Naive thymus-derived CD8-positive, alpha-beta T cell (primary cell): ENCODE measurements at regions of chr17 and their contacts with region 1.

Region 1: GRCh38 chr17:74776044-74776977 is at the start of gene NAT9:
- DNase-seq: peak; percentile 95 to 100 (median 98)
- ATAC-seq: peak; percentile 76 to 83
- H3K4me3 Mint-ChIP-seq: peak within 1 kb of the TSS; percentile 96 to 100 (median 99)
- H3K27ac Mint-ChIP-seq: peak within 1 kb of the TSS; percentile 93 to 99 (median 96)
- H3K4me1 Mint-ChIP-seq: peaks cover 26 to 71% (median 61%) of the 10 kb centered on the region in 4 donors
- H3K27me3 Mint-ChIP-seq: no peaks in the 10 kb centered on the region
- polyA plus RNA-seq, gene NAT9: 9.8 to 28.3 (median 20.2) TPM

Region 2: DNA sequence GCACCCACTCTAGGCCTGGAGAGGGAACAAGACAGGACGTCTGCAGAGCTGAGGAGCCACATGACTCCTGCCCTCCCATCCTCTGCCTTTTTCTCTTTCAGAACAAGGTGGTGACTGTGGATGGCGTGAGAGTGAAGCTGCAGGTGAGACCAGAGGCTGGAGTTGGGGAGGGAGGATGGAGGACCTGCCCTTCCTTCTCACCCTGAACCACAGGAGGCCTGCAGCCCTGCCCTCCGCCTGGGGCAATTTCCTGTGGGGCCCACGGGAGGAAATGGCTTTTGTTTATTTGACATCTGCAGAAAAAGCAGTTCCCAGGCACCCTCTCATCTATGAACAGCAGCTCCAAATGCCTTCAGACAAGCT is 34.2 kb before region 1 on chr17:
- POLR2A ChIA-PET with region 1: interaction called, 231 read pairs
- DNase-seq: peak in 5 of 10 donors; percentile 43 to 71 (median 60)
- ATAC-seq: peak; percentile 4 to 16
- H3K4me3 Mint-ChIP-seq: peak overlapping the region; percentile 64 to 88 (median 84)
- H3K27ac Mint-ChIP-seq: peak overlapping the region; percentile 90 to 99 (median 96)
- H3K4me1 Mint-ChIP-seq: peaks cover 42 to 88% (median 85%) of the 10 kb centered on the region in 4 donors
- H3K27me3 Mint-ChIP-seq: no peaks in the 10 kb centered on the region

Region 3: GRCh38 chr17:74748529-74749365 is 27.6 kb before region 1 on chr17 and contains the start of gene NHERF1:
- POLR2A ChIA-PET with region 1: interaction called, 231 read pairs
- DNase-seq: peak; percentile 87 to 94 (median 92)
- ATAC-seq: peak; percentile 82 to 84
- H3K4me3 Mint-ChIP-seq: peak within 1 kb of the TSS; percentile 92 to 100 (median 98)
- H3K27ac Mint-ChIP-seq: peak within 1 kb of the TSS; percentile 87 to 97 (median 94)
- H3K4me1 Mint-ChIP-seq: peaks cover 42 to 78% (median 71%) of the 10 kb centered on the region in 4 donors
- H3K27me3 Mint-ChIP-seq: no peaks in the 10 kb centered on the region
- polyA plus RNA-seq, gene NHERF1: 277 to 351 (median 324) TPM

Region 4: DNA sequence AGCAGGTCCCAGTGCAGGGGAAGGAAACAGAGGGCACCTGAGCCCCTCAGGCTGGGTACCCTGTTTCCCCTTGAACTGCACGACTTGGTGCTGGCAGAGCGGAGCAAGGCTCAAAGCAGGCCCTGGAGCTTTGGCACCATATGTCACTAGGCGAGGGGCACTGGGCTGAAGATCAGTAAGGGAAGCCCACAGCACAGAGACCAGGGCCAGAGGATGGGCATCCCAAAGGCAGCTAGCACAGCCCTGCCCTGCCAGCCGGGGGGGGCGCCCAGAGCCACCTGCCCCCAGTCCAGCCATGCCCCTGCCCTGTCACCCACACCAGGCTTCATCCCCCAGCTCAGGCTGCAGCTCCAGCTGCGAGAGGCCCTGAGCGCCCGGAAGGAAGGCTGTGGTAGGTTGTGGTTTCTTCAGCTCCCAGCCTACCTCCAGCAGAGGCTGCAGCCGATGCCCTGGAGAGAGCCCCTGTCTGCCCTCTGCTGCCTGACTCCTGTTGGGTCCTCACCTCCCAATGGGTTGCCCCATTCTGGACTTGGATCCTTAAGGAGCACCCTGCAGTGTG is 17.0 kb before region 1 on chr17:
- POLR2A ChIA-PET with region 1: interaction called, 113 read pairs
- DNase-seq: peak in 8 of 10 donors; percentile 34 to 74 (median 56)
- ATAC-seq: peak; percentile 91 to 92
- H3K4me3 Mint-ChIP-seq: peak overlapping the region; percentile 69 to 97 (median 84)
- H3K27ac Mint-ChIP-seq: peak overlapping the region; percentile 88 to 94 (median 92)
- H3K4me1 Mint-ChIP-seq: peaks cover 30 to 81% (median 71%) of the 10 kb centered on the region in 4 donors
- H3K27me3 Mint-ChIP-seq: no peaks in the 10 kb centered on the region

Region 5: GRCh38 chr17:74790161-74791054 is 14.1 kb after region 1 on chr17:
- POLR2A ChIA-PET with region 1: interaction called, 12 read pairs
- DNase-seq: no peak
- ATAC-seq: peak; percentile 23 to 45
- H3K4me3 Mint-ChIP-seq: peak overlapping the region in 9 of 10 donors; percentile 19 to 73 (median 62)
- H3K27ac Mint-ChIP-seq: peak overlapping the region; percentile 53 to 85 (median 74)
- H3K4me1 Mint-ChIP-seq: peaks cover 18 to 51% (median 38%) of the 10 kb centered on the region in 4 donors
- H3K27me3 Mint-ChIP-seq: no peaks in the 10 kb centered on the region